Activated B cell treated with CpG ODN at 0.5 μM for 24 hours (primary cell): ENCODE measurements at regions of chr6 and their contacts with region 1.

Region 1: DNA sequence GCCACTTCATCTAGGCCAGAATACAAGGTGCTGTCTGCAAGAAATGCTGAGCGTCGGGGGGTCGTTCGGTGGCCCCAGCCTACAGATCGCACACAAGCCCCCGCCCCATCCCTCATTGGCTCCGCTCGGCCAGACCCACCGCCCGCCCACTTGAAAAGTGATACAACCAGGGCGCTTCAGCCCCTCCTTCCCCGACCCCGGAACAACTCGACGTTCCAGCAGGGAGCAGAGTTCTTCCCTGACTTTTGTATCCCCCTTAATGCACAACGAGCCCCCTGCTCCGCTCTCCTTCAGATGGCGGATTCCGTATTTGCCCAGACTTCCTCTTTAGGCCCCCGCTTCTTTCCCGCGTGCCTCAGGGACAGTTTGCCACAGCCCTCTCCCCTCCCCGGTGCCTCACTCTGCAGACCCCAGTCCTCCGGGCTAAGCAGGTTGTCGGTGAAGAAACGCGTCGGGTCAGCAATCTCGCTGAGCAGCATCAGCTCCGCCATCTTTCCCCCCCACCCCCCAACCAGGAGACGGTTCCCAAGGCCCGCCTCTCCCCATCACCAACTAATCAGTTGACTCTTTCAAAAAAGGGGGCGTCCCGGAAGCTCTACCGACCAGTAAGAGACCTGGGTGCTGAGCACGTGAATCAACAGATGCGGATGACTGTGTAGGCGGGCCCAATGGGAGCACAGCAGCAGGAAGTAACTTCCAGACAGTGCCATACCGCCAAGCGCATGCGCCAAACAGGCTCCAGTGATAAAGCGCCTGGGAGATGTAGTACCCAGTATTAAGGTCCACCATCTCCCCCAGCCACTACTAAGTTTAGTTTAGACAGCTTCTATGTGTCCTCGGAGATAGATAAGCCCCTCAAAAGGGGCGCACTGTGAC is at the start of gene ATF6B:
- DNase-seq: peak; percentile 81
- ATAC-seq: peak; percentile 92
- H3K4me3 Mint-ChIP-seq: peak within 1 kb of the TSS; percentile 99
- H3K27ac Mint-ChIP-seq: peak within 1 kb of the TSS; percentile 95
- H3K4me1 Mint-ChIP-seq: peaks cover 53% of the 10 kb centered on the region
- H3K27me3 Mint-ChIP-seq: no peaks in the 10 kb centered on the region
- CTCF ChIP-seq: no peak
- total RNA-seq, gene ATF6B: 144 and 148 TPM in 2 replicates

Region 2: DNA sequence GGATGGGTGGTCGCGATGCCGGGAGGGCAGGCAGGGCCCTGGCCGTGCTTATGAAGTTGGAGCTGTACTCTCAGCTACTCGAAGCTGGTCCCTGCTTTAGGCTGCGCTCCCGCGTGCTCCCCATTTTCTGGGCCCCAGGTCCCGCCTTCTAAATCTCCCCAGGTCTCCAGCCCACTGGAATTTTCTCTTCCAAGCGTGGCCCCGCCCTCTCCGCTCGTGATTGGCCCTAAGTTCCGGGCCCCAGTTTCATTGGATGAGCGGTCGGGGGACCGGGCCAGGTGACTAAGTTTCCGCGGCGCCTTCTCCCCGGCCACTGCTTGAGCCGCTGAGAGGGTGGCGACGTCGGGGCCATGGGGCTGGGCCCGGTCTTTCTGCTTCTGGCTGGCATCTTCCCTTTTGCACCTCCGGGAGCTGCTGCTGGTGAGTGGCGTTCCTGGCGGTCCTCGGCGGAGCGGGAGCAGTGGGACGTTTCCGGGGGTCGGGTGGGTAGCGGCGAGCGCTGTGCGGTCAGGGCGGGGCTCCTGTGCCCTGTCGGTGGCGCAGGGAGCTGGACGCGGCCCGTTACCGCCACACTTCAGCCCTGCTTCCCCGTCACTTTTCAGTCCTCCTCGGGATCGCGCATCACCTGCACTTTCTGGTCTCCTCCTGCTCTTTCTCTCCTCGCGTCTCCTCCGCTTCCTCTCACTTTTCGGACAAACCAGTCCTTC is 724.5 kb before region 1 on chr6 and contains the start of gene MICA:
- CTCF ChIA-PET with region 1: no interaction called
- POLR2A ChIA-PET with region 1: no interaction called
- intact Hi-C with region 1: no loop called
- DNase-seq: peak; percentile 63
- ATAC-seq: peak; percentile 65
- H3K4me3 Mint-ChIP-seq: peak within 1 kb of the TSS; percentile 91
- H3K27ac Mint-ChIP-seq: peak within 1 kb of the TSS; percentile 80
- H3K4me1 Mint-ChIP-seq: peaks cover 63% of the 10 kb centered on the region
- H3K27me3 Mint-ChIP-seq: no peaks in the 10 kb centered on the region
- CTCF ChIP-seq: no peak
- total RNA-seq, gene MICA: 8.9 and 9.0 TPM in 2 replicates

Region 3: GRCh38 chr6:31901953-31902643 is 225.9 kb before region 1 on chr6 and contains the start of gene ZBTB12:
- CTCF ChIA-PET with region 1: no interaction called
- POLR2A ChIA-PET with region 1: interaction called, 3 read pairs
- intact Hi-C with region 1: loop called (anchors 1 kb)
- DNase-seq: peak; percentile 83
- ATAC-seq: peak; percentile 69
- H3K4me3 Mint-ChIP-seq: peak within 1 kb of the TSS; percentile 89
- H3K27ac Mint-ChIP-seq: peak within 1 kb of the TSS; percentile 86
- H3K4me1 Mint-ChIP-seq: peaks cover 27% of the 10 kb centered on the region
- H3K27me3 Mint-ChIP-seq: no peaks in the 10 kb centered on the region
- CTCF ChIP-seq: no peak
- total RNA-seq, gene ZBTB12: 4.8 and 5.5 TPM in 2 replicates

Region 4: GRCh38 chr6:32153564-32154513 is 25.9 kb after region 1 on chr6 and contains the start of gene PPT2:
- CTCF ChIA-PET with region 1: interaction called, 3 read pairs
- POLR2A ChIA-PET with region 1: no interaction called
- intact Hi-C with region 1: loop called (anchors 1 kb)
- DNase-seq: peak; percentile 60
- ATAC-seq: peak; percentile 49
- H3K4me3 Mint-ChIP-seq: peak within 1 kb of the TSS; percentile 96
- H3K27ac Mint-ChIP-seq: peak within 1 kb of the TSS; percentile 59
- H3K4me1 Mint-ChIP-seq: peaks cover 33% of the 10 kb centered on the region
- H3K27me3 Mint-ChIP-seq: peaks cover 29% of the 10 kb centered on the region
- CTCF ChIP-seq: no peak
- total RNA-seq, gene PPT2: 1.8 and 3.0 TPM in 2 replicates

Region 5: GRCh38 chr6:32190054-32190851 is 62.3 kb after region 1 on chr6 and contains the start of gene PBX2:
- CTCF ChIA-PET with region 1: interaction called, 4 read pairs
- POLR2A ChIA-PET with region 1: interaction called, 59 read pairs
- intact Hi-C with region 1: loop called (anchors 1 kb)
- DNase-seq: peak; percentile 61
- ATAC-seq: peak; percentile 86
- H3K4me3 Mint-ChIP-seq: peak within 1 kb of the TSS; percentile 91
- H3K27ac Mint-ChIP-seq: peak within 1 kb of the TSS; percentile 96
- H3K4me1 Mint-ChIP-seq: peaks cover 85% of the 10 kb centered on the region
- H3K27me3 Mint-ChIP-seq: no peaks in the 10 kb centered on the region
- CTCF ChIP-seq: no peak
- total RNA-seq, gene PBX2: 134 and 153 TPM in 2 replicates

Region 6: GRCh38 chr6:32224696-32225095 is 96.7 kb after region 1 on chr6:
- CTCF ChIA-PET with region 1: no interaction called
- POLR2A ChIA-PET with region 1: interaction called, 11 read pairs
- intact Hi-C with region 1: no loop called
- DNase-seq: no peak
- ATAC-seq: peak; percentile 83
- H3K4me3 Mint-ChIP-seq: peak overlapping the region; percentile 2
- H3K27ac Mint-ChIP-seq: peak overlapping the region; percentile 83
- H3K4me1 Mint-ChIP-seq: peaks cover 75% of the 10 kb centered on the region
- H3K27me3 Mint-ChIP-seq: no peaks in the 10 kb centered on the region
- CTCF ChIP-seq: no peak